CD8-positive, alpha-beta T cell (primary cell): ENCODE measurements at regions of chr1 and their contacts with region 1.

Region 1: GRCh38 chr1:174391716-174392115 is 56.0 kb upstream of the GPR52 start:
- DNase-seq: no peak
- ATAC-seq: no peak
- H3K4me3 ChIP-seq: no peak overlapping the region
- H3K4me3 Mint-ChIP-seq: no peak overlapping the region
- H3K27ac ChIP-seq: no peak overlapping the region
- H3K27ac Mint-ChIP-seq: no peak overlapping the region
- H3K4me1 ChIP-seq: no peaks in the 10 kb centered on the region
- H3K4me1 Mint-ChIP-seq: no peaks in the 10 kb centered on the region
- H3K27me3 ChIP-seq: no peaks in the 10 kb centered on the region
- H3K27me3 Mint-ChIP-seq: no peaks in the 10 kb centered on the region
- CTCF ChIP-seq: no peak

Region 2: GRCh38 chr1:174367892-174368291 is 23.8 kb before region 1 on chr1:
- CTCF ChIA-PET with region 1: no interaction called
- POLR2A ChIA-PET with region 1: interaction called, 4 read pairs
- intact Hi-C with region 1: loop called in 1 of 2 experiments (anchors 2 kb)
- DNase-seq: no peak
- ATAC-seq: no peak
- H3K4me3 ChIP-seq: no peak overlapping the region
- H3K4me3 Mint-ChIP-seq: no peak overlapping the region
- H3K27ac ChIP-seq: no peak overlapping the region
- H3K27ac Mint-ChIP-seq: no peak overlapping the region
- H3K4me1 ChIP-seq: no peaks in the 10 kb centered on the region
- H3K4me1 Mint-ChIP-seq: peaks cover 5% of the 10 kb centered on the region
- H3K27me3 ChIP-seq: no peaks in the 10 kb centered on the region
- H3K27me3 Mint-ChIP-seq: no peaks in the 10 kb centered on the region
- CTCF ChIP-seq: no peak